ENCODE measurements at regions of chr7 and their contacts with region 1.

Region 1: DNA sequence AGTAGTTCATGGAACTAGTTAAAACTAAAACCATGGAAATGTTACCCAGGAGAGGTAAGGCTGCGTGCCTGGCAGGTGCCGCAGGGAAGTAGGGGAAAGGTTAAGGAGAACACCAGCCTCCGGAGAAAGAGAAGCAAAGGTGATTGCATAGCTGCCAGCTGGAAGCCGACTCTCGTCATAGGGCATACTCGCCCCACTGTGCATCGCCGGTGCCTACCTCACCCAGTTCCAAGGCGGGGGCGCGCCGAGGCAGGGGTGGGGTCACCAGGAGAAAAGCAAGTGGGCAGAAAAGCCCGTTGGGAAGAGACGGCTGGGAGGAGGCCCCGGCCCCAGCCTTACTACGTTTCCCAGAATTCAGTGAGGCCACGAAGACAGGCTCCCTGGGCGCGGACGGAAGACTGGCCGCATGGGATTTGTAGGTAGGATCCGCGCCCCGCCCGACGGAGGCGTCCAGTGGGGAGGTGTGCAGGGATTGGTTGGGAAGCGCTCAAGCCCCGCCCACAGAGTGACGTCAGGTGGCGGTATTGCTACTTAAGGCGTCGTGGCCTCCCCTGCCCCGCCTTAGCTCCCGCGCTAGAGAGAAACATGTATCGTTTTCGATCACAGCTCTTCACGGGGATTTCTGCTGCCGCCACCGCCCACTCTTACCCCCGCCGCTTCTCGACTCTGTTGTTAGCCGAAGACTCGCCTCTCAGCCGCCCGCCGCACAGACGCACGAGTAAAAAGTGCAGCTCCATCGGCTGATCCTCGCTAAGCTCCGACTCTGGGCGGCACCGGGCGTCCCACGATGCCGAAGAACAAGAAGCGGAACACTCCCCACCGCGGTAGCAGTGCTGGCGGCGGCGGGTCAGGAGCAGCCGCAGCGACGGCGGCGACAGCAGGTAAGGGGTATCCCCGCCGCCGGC is at the start of gene IFRD1:
- DNase-seq: peak; percentile 98
- H3K4me3 Mint-ChIP-seq: peak within 1 kb of the TSS; percentile 96
- H3K27ac Mint-ChIP-seq: peak within 1 kb of the TSS; percentile 96
- H3K4me1 Mint-ChIP-seq: peaks cover 35% of the 10 kb centered on the region
- H3K27me3 Mint-ChIP-seq: no peaks in the 10 kb centered on the region
- total RNA-seq, gene IFRD1: 43.4 to 49.7 TPM

Region 2: GRCh38 chr7:111561885-111562732 is 888.0 kb before region 1 on chr7 and contains the start of gene IMMP2L:
- CTCF ChIA-PET with region 1: no interaction called
- POLR2A ChIA-PET with region 1: no interaction called
- intact Hi-C with region 1: loop called (anchors 1 kb)
- DNase-seq: peak; percentile 93
- H3K4me3 Mint-ChIP-seq: peak within 1 kb of the TSS; percentile 83
- H3K27ac Mint-ChIP-seq: peak within 1 kb of the TSS; percentile 79
- H3K4me1 Mint-ChIP-seq: peaks cover 40% of the 10 kb centered on the region
- H3K27me3 Mint-ChIP-seq: peaks cover 4% of the 10 kb centered on the region
- total RNA-seq, gene IMMP2L: 14.4 to 20.5 TPM

Region 3: DNA sequence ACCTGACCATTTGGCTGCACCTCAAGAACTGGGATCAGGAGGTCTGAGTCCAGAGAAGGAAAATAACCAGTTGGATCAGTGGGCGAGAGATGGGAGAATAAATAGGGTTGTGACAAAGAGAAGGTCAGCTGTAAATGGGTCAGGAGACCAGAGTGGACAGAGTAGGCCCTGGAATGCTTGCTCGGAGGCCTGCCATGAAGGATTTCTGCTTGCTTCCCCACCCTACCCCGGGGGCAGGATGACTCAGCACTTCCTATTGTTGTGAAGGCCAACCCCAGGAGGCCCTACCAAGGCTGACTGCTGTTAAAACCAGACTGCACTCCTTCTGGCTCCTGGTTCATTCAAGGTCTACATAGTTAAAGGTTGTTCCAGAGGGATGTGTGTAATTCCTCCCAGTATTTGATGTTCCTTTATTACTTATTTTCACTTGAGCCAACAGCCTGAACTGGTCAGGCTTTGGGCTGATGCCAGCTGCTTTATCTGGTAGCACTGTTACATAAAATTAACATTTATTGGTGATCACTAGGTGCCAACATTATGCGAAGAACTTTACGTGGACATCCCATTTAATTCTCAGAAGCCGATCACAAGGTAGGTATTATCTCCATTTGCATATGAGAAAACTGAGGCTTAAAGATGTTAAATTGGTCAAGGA is 27.2 kb before region 1 on chr7:
- CTCF ChIA-PET with region 1: no interaction called
- POLR2A ChIA-PET with region 1: interaction called, 3 read pairs
- intact Hi-C with region 1: loop called (anchors 1 kb)
- DNase-seq: peak; percentile 50
- H3K4me3 Mint-ChIP-seq: no peak overlapping the region
- H3K27ac Mint-ChIP-seq: no peak overlapping the region
- H3K4me1 Mint-ChIP-seq: peaks cover 21% of the 10 kb centered on the region
- H3K27me3 Mint-ChIP-seq: no peaks in the 10 kb centered on the region

Region 4: DNA sequence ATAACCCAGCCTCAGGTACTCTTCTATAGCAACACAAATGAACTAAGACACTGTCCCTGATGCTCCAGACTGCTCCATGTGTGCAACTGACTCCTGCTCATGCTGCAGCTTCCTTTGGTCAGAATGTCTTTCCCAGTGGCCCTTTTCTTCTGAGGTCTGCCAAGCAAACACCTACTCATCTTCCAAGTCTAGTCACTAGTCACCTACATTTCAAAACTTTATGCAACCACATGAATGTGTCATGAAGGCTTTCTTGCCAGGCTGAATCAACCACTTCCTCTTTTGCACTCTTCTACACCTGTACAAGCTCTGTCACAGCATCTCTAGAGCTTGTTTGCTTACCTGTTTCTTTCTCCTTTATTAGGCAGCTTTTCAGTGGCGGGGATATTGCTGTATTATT is 106.5 kb after region 1 on chr7:
- CTCF ChIA-PET with region 1: interaction called, 9 read pairs
- POLR2A ChIA-PET with region 1: no interaction called
- intact Hi-C with region 1: loop called (anchors 5 kb)
- DNase-seq: peak; percentile 37
- H3K4me3 Mint-ChIP-seq: no peak overlapping the region
- H3K27ac Mint-ChIP-seq: no peak overlapping the region
- H3K4me1 Mint-ChIP-seq: peaks cover 17% of the 10 kb centered on the region
- H3K27me3 Mint-ChIP-seq: no peaks in the 10 kb centered on the region

Region 5: DNA sequence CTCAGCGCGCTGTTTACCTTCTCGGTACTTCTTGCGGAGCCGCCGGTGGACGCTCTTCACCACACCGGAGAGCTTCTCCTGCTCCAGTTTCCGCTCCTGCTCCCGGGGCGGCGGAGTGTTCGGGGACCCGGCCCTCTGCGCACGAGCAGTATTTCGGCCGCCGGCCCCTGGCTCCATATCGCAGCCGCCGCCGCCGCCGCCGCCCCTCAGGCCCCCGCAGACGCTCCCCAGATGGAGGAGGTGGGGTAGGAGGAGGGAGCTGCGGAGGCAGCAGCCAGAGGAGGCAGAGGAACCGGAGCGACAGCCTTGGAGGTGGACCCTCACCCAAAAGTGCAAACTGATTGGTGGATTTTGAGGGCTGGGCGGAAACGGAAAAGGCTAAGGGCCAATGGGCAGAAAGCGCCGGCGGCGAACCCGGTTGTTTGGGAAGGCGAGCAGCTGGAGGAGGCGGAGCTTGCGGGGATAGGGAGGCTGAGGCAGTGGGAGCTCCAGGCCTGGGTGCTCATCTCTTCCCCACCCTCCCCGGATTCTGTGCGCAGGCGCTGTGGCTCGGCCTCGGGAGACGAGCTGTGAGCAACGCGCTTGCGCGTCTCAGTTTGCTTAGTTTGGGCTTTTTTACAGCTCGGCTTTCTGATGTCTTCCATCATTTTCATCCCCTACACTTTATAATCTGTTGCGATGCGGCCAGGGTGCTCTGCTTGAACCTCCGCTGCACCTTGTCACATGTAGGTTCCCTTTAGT is 489.6 kb after region 1 on chr7:
- CTCF ChIA-PET with region 1: interaction called, 3 read pairs
- POLR2A ChIA-PET with region 1: interaction called, 4 read pairs
- intact Hi-C with region 1: loop called (anchors 1 kb)
- DNase-seq: peak; percentile 100
- H3K4me3 Mint-ChIP-seq: peak overlapping the region; percentile 87
- H3K27ac Mint-ChIP-seq: peak overlapping the region; percentile 93
- H3K4me1 Mint-ChIP-seq: peaks cover 34% of the 10 kb centered on the region
- H3K27me3 Mint-ChIP-seq: peaks cover 2% of the 10 kb centered on the region